ENCODE measurements at regions of chr4 and their contacts with region 1.

Region 1: GRCh38 chr4:146916479-146917076 is 29.1 kb downstream of the TTC29 start:
- DNase-seq: peak; percentile 28
- H3K4me3 Mint-ChIP-seq: no peak overlapping the region
- H3K27ac Mint-ChIP-seq: no peak overlapping the region
- H3K4me1 Mint-ChIP-seq: no peaks in the 10 kb centered on the region
- H3K27me3 Mint-ChIP-seq: peaks cover 4% of the 10 kb centered on the region

Region 2: GRCh38 chr4:146095091-146095690 is 821.4 kb before region 1 on chr4:
- CTCF ChIA-PET with region 1: no interaction called
- intact Hi-C with region 1: loop called (anchors 1 kb)
- DNase-seq: peak; percentile 39
- H3K4me3 Mint-ChIP-seq: no peak overlapping the region
- H3K27ac Mint-ChIP-seq: no peak overlapping the region
- H3K4me1 Mint-ChIP-seq: no peaks in the 10 kb centered on the region
- H3K27me3 Mint-ChIP-seq: peaks cover 7% of the 10 kb centered on the region

Region 3: DNA sequence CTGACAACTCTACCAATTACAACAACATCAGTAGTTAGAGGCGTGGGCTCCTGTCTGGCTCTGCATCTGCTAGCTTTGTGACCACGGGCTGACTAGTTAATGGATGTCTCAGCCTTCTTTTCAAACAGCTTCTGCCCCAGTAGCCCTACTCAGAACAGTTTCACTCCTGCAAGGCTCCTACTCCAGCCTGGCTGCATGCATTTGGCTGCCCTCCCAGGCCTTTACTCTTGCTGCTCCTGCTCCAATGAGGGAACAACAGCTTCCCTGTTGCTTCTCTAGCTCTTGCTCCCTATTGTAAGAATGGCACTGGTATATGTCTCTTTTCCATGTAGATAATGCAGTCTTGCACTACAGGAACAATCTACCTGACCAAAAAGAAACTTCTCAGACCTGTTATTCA is 64.2 kb before region 1 on chr4:
- CTCF ChIA-PET with region 1: no interaction called
- intact Hi-C with region 1: no loop called
- DNase-seq: no peak
- H3K4me3 Mint-ChIP-seq: no peak overlapping the region
- H3K27ac Mint-ChIP-seq: no peak overlapping the region
- H3K4me1 Mint-ChIP-seq: no peaks in the 10 kb centered on the region
- H3K27me3 Mint-ChIP-seq: peaks cover 7% of the 10 kb centered on the region